Activated T-helper 1 cell treated with anti-CD3 and anti-CD28 coated beads, Interleukin-12 subunit alpha, Interleukin-12 subunit beta, Interleukin-2, Interleukin-4 antibody, amounts not matched to agents 30 ng/mL and 10 ng/mL and 1 ng/mL, durations not matched to agents 14 hours and 24 hours and 36 hours (primary cell): ENCODE measurements at regions of chr12 and their contacts with region 1.

Region 1: DNA sequence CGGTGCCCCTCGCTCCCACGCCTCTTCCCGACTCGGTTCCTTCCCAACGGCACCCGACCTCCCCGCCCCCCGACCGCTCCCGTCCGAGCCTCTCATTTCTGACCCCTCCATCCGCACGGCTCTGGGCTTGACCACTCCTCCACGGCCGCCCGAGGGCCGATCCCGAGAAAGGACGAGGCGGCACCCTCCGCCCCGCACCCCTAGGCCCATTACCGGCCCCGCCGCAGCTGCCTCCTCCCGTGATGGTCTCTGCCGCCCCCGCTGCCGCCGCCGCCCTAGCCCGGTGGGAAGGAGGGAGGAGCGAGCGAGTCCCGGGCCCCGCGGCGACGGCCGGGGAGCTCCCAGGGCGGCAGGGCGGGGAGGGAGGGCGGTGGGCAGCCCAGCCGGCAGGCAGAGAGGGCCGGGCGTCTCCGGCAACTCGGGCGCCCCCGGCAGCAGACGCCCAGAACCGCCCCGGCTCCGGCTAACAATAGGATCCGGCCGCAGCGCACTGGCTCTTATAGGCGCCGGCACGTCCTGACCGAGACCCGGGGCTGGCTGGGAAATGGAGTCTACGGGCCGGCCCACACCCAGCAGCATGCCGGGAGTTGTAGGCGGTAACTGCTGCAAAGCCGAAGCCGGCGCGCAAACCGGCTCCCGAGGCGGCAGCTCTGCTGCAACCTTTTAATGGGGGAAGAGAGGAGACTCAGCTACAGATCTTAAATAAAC is at the start of gene CSRNP2:
- DNase-seq: peak; percentile 94
- H3K4me3 Mint-ChIP-seq: peak within 1 kb of the TSS; percentile 99
- H3K27ac Mint-ChIP-seq: peak within 1 kb of the TSS; percentile 91
- H3K4me1 Mint-ChIP-seq: peaks cover 34% of the 10 kb centered on the region
- H3K27me3 Mint-ChIP-seq: peaks cover 3% of the 10 kb centered on the region
- total RNA-seq, gene CSRNP2: 28.6 and 35.2 TPM in 2 replicates

Region 2: GRCh38 chr12:51217968-51218606 is 134.8 kb after region 1 on chr12 and contains the start of gene POU6F1:
- intact Hi-C with region 1: loop called (anchors 1 kb)
- DNase-seq: peak; percentile 60
- H3K4me3 Mint-ChIP-seq: peak within 1 kb of the TSS; percentile 76
- H3K27ac Mint-ChIP-seq: peak within 1 kb of the TSS; percentile 56
- H3K4me1 Mint-ChIP-seq: peaks cover 21% of the 10 kb centered on the region
- H3K27me3 Mint-ChIP-seq: no peaks in the 10 kb centered on the region
- total RNA-seq, gene POU6F1: 5.2 and 6.7 TPM in 2 replicates

Region 3: GRCh38 chr12:52903285-52903854 is 1820.1 kb after region 1 on chr12:
- intact Hi-C with region 1: no loop called
- DNase-seq: peak; percentile 8
- H3K4me3 Mint-ChIP-seq: no peak overlapping the region
- H3K27ac Mint-ChIP-seq: no peak overlapping the region
- H3K4me1 Mint-ChIP-seq: peaks cover 4% of the 10 kb centered on the region
- H3K27me3 Mint-ChIP-seq: peaks cover 2% of the 10 kb centered on the region